AG04449 (cell line): ENCODE measurements at regions of chr3 and their contacts with region 1.

Region 1: DNA sequence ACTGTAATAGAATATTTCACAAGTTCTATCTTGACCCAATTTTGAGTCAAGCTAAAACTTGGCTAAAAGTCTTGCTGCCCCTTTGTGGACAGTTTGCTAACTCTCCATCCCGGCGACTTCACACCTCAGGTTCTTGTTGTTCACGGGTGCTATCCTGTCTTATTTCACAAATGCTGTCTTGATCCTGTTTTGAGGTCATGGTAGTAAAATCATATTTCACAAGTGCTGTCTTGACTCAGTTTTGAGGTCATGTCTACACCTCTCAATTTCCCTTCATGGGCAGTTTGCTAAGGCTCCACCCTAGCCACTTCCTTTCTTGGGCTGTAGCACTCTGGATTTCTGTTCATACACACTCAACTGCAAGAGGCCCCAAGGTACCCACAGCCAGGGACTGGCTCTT is 45.0 kb upstream of the GK5 start:
- DNase-seq: no peak
- H3K4me3 ChIP-seq: no peak overlapping the region
- CTCF ChIP-seq: no peak

Region 2: DNA sequence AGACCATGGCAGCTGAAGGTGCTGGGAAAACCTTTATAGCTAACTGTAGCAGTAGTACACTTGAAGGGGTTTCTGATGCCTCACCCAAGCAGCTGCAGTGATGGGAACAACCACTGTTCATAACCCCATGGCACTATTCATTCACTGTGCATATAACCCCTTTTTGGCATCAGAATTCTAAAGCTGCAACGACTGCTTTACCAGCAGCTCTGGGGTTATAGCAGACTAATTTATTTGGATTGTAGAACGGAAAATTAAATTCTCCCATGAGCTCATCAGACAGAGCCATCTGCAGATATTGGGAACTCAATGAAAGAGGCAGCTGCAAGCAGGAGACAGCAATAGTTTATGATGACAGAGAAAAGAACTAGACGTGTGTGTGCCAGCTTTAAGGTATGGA is 149.7 kb before region 1 on chr3:
- CTCF ChIA-PET with region 1: interaction called, 12 read pairs
- POLR2A ChIA-PET with region 1: no interaction called
- DNase-seq: no peak
- H3K4me3 ChIP-seq: no peak overlapping the region
- CTCF ChIP-seq: no peak

Region 3: GRCh38 chr3:142424754-142425153 is 154.3 kb after region 1 on chr3:
- CTCF ChIA-PET with region 1: no interaction called
- POLR2A ChIA-PET with region 1: no interaction called
- DNase-seq: no peak
- H3K4me3 ChIP-seq: no peak overlapping the region
- CTCF ChIP-seq: no peak